ENCODE measurements at regions of chr3 and their contacts with region 1.

Region 1: DNA sequence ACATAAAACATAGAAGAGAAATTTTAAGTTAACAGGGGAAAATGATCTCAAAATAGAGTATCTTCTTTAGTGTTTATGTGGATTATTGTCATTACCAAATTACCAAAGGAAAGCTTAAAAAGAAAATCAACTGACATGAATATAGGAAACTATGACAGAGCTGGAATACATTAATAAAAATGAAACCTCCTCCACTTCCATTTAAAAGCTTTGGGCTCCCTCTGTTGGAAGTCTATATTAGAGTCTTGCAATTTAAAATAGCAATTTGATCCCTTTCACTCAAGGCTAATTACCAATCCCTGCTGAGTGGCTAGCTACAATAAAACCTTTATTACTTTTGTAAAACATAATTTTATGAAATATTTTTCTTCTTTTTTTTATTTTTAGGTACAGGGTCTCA is 61.4 kb upstream of the IMPG2 start:
- DNase-seq: no peak
- ATAC-seq: no peak
- H3K4me3 ChIP-seq: no peak overlapping the region
- H3K27ac ChIP-seq: no peak overlapping the region
- H3K4me1 ChIP-seq: peaks cover 11% of the 10 kb centered on the region; the same call in 1 of the 2 replicates
- H3K27me3 ChIP-seq: no peaks in the 10 kb centered on the region
- CTCF ChIP-seq: peak in 2 of 3 experiments; percentile 29 to 52; a peak in 3 of 6 replicates
- EP300 ChIP-seq: no peak
- POLR2A ChIP-seq: no peak
- RAD21 ChIP-seq: peak; percentile 66

Region 2: GRCh38 chr3:100893590-100893989 is 488.2 kb before region 1 on chr3:
- CTCF ChIA-PET with region 1: no interaction called
- POLR2A ChIA-PET with region 1: no interaction called
- RAD21 ChIA-PET with region 1: interaction called, 3 read pairs
- SMC1A ChIA-PET with region 1: no interaction called
- in situ Hi-C with region 1: no loop called
- intact Hi-C with region 1: loop called (anchors 5 kb)
- DNase-seq: no peak
- ATAC-seq: no peak
- H3K4me3 ChIP-seq: no peak overlapping the region
- H3K27ac ChIP-seq: no peak overlapping the region
- H3K4me1 ChIP-seq: peaks cover 7% of the 10 kb centered on the region
- H3K27me3 ChIP-seq: no peaks in the 10 kb centered on the region
- CTCF ChIP-seq: peak in 2 of 3 experiments; percentile 4 to 24; a peak in 2 of 6 replicates
- EP300 ChIP-seq: no peak
- POLR2A ChIP-seq: no peak
- RAD21 ChIP-seq: no peak

Region 3: GRCh38 chr3:101069901-101070798 is 311.7 kb before region 1 on chr3:
- CTCF ChIA-PET with region 1: interaction called, 25 read pairs
- POLR2A ChIA-PET with region 1: no interaction called
- RAD21 ChIA-PET with region 1: no interaction called
- SMC1A ChIA-PET with region 1: interaction called, 18 read pairs
- in situ Hi-C with region 1: loop called (anchors 5 kb)
- intact Hi-C with region 1: loop called (anchors 1 kb)
- DNase-seq: peak; percentile 7
- ATAC-seq: peak; percentile 99
- H3K4me3 ChIP-seq: no peak overlapping the region
- H3K27ac ChIP-seq: no peak overlapping the region
- H3K4me1 ChIP-seq: no peaks in the 10 kb centered on the region
- H3K27me3 ChIP-seq: no peaks in the 10 kb centered on the region
- CTCF ChIP-seq: peak; percentile 60 to 92 (median 87)
- EP300 ChIP-seq: no peak
- POLR2A ChIP-seq: no peak
- RAD21 ChIP-seq: peak; percentile 76

Region 4: DNA sequence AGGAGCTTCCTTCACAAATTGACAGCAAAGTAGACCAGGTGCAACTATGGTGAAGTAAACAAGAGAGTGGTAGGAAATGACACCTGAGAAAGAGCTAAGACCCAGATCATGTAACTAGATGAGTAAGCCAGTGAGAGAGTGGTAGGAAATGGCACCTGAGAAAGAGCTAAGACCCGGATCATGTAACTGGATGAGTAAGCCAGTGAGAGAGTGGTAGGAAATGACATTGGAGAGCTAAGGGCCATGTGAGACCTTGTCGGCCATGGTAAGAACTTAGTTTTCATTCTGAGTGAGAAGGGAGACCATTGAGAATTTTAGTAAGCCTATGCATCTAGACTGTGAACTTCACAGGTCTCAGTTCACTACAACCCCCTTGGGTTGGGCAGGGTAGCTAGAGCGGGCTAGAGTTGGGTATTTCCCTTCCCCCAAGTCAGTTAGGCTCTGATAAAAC is 136.6 kb after region 1 on chr3:
- CTCF ChIA-PET with region 1: no interaction called
- POLR2A ChIA-PET with region 1: no interaction called
- RAD21 ChIA-PET with region 1: interaction called, 3 read pairs
- SMC1A ChIA-PET with region 1: interaction called, 3 read pairs
- in situ Hi-C with region 1: no loop called
- intact Hi-C with region 1: loop called (anchors 2 kb)
- DNase-seq: peak; percentile 92
- ATAC-seq: peak; percentile 96
- H3K4me3 ChIP-seq: peak overlapping the region; percentile 22; the same call in 1 of the 2 replicates
- H3K27ac ChIP-seq: peak overlapping the region; percentile 39; the same call in 1 of the 2 replicates
- H3K4me1 ChIP-seq: peaks cover 8% of the 10 kb centered on the region; the same call in 1 of the 2 replicates
- H3K27me3 ChIP-seq: no peaks in the 10 kb centered on the region
- CTCF ChIP-seq: no peak
- EP300 ChIP-seq: peak in 1 of 2 experiments; percentile 61; a peak in 1 of 4 replicates
- POLR2A ChIP-seq: no peak
- RAD21 ChIP-seq: no peak

Region 5: GRCh38 chr3:101561630-101562328 is 180.0 kb after region 1 on chr3 and contains the start of gene TRMT10C:
- CTCF ChIA-PET with region 1: no interaction called
- POLR2A ChIA-PET with region 1: no interaction called
- RAD21 ChIA-PET with region 1: no interaction called
- SMC1A ChIA-PET with region 1: no interaction called
- in situ Hi-C with region 1: no loop called
- intact Hi-C with region 1: loop called (anchors 10 kb)
- DNase-seq: peak; percentile 74
- ATAC-seq: peak; percentile 98
- H3K4me3 ChIP-seq: peak within 1 kb of the TSS; percentile 89
- H3K27ac ChIP-seq: peak within 1 kb of the TSS; percentile 80
- H3K4me1 ChIP-seq: peaks cover 3% of the 10 kb centered on the region
- H3K27me3 ChIP-seq: no peaks in the 10 kb centered on the region
- CTCF ChIP-seq: no peak
- EP300 ChIP-seq: no peak
- POLR2A ChIP-seq: peak; percentile 97
- RAD21 ChIP-seq: no peak
- polyA plus RNA-seq, gene TRMT10C: 76.9 to 82.1 TPM

Measured in GM12878 (cell line).